RWPE1 (cell line): ENCODE measurements at regions of chr7 and their contacts with region 1.

Region 1: GRCh38 chr7:35985126-35985754 is 167.8 kb upstream of the EEPD1 start:
- DNase-seq: peak; percentile 65
- H3K27ac ChIP-seq: no peak overlapping the region
- CTCF ChIP-seq: peak; percentile 85

Region 2: GRCh38 chr7:36291387-36292316 is 306.4 kb after region 1 on chr7:
- CTCF ChIA-PET with region 1: interaction called, 37 read pairs
- POLR2A ChIA-PET with region 1: no interaction called
- DNase-seq: peak; percentile 74
- H3K27ac ChIP-seq: peak overlapping the region; percentile 33
- CTCF ChIP-seq: peak; percentile 96

Region 3: DNA sequence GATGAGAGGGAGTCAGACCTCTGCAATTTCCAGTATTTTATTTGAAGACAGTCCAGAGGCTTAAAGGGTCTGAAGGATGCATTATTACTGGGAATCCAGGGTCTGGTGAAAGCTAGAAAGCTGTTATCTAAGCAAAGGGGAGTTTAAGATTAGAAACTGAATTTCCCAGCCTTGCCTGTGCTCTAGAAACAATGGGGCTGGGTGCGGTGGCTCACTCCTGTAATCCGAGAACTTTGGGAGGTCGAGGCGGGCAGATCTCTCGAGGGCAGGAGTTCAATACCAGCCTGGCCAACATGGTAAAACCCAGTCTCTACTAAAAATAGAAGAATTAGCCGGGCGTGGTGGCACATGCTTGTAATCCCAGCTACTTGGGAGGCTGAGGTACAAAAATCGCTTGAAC is 332.9 kb after region 1 on chr7:
- CTCF ChIA-PET with region 1: interaction called, 13 read pairs
- POLR2A ChIA-PET with region 1: no interaction called
- DNase-seq: no peak
- H3K27ac ChIP-seq: no peak overlapping the region
- CTCF ChIP-seq: no peak